Naive thymus-derived CD8-positive, alpha-beta T cell (primary cell): ENCODE measurements at regions of chr1 and their contacts with region 1.

Region 1: DNA sequence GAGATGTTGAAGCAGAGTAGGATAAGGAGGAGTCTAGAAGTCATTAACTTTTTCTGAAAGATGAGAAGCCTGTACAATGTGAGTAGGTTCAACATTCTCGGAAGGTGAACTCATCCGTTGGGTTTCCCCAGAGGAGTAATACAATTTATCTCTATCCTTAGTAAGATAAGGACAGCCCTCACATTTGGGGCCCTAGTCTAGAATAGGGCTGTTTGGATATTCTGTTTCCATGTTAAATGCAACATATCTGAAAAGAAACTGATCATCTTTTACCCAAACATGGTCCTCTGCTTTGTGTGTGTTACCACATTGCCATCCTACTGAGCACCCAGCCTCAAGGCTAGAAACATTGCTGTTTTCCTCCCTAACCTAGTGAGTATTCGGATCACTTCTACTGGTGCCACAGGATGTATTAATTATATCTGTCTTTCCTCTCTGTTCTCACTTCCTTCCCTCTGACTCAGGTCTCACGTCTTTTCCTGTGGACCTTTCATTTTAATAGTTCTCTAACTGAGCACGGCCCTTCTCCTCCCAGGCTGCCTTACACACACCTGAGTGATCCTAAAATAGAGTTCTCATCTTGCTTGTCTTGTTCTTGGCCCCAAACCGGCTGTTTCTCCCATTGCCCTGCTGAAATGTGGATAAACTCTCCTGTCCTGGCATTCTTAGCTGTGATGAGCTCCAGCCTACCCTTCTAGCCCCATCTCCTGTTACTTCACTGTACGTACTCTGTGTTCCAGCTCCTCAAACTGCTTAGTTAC is 91.7 kb downstream of the CDC14A start:
- DNase-seq: peak in 4 of 10 donors; percentile 23 to 47 (median 34)
- ATAC-seq: peak; percentile 18 to 21
- H3K4me3 Mint-ChIP-seq: peak overlapping the region; percentile 63 to 88 (median 74)
- H3K27ac Mint-ChIP-seq: peak overlapping the region; percentile 96 to 99 (median 98)
- H3K4me1 Mint-ChIP-seq: peaks cover 19 to 89% (median 75%) of the 10 kb centered on the region in 4 donors
- H3K27me3 Mint-ChIP-seq: no peaks in the 10 kb centered on the region

Region 2: DNA sequence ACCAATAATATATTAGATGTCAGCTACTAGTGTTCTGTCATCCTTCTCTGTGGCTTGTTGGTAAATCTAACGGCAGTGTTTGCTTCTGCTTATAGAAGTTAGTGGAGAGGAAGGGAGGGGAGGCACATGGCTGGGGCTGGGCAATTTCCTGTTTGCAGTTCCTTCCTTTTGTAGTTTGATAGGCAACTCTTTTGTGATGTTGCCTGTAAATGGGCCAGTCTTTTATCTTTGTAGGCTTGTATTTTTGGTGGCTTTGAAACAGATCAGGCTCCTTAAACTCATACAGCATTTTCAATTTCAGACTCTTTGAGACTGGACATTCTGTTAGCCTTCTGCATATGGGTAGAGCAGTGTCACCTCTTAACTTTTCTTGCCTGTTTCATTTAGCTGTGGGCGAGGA is 43.6 kb before region 1 on chr1:
- POLR2A ChIA-PET with region 1: interaction called, 20 read pairs
- DNase-seq: peak; percentile 35 to 88 (median 71)
- ATAC-seq: peak; percentile 84 to 89
- H3K4me3 Mint-ChIP-seq: peak overlapping the region; percentile 43 to 87 (median 77)
- H3K27ac Mint-ChIP-seq: peak overlapping the region; percentile 62 to 97 (median 94)
- H3K4me1 Mint-ChIP-seq: peaks cover 45 to 91% (median 83%) of the 10 kb centered on the region in 4 donors
- H3K27me3 Mint-ChIP-seq: no peaks in the 10 kb centered on the region

Region 3: GRCh38 chr1:100413035-100413434 is 31.0 kb before region 1 on chr1:
- POLR2A ChIA-PET with region 1: interaction called, 12 read pairs
- DNase-seq: peak in 1 of 10 donors; percentile 17
- ATAC-seq: peak; percentile 29 to 42
- H3K4me3 Mint-ChIP-seq: peak overlapping the region in 9 of 10 donors; percentile 19 to 69 (median 52)
- H3K27ac Mint-ChIP-seq: peak overlapping the region; percentile 36 to 91 (median 84)
- H3K4me1 Mint-ChIP-seq: peaks cover 49 to 87% (median 79%) of the 10 kb centered on the region in 4 donors
- H3K27me3 Mint-ChIP-seq: no peaks in the 10 kb centered on the region